Right cardiac atrium (tissue), 5 donors: ENCODE measurements at regions of chr18 and their contacts with region 1.

Region 1: GRCh38 chr18:623761-624620 is 27.2 kb downstream of the CLUL1 start:
- DNase-seq: peak; percentile 61 to 86 (median 70)
- ATAC-seq: peak; percentile 72 to 79
- H3K4me3 ChIP-seq: no peak overlapping the region
- H3K27ac ChIP-seq: no peak overlapping the region
- H3K4me1 ChIP-seq: no peaks in the 10 kb centered on the region
- H3K27me3 ChIP-seq: no peaks in the 10 kb centered on the region

Region 2: GRCh38 chr18:543447-544078 is 80.4 kb before region 1 on chr18:
- intact Hi-C with region 1: no loop called
- DNase-seq: no peak
- ATAC-seq: no peak
- H3K4me3 ChIP-seq: no peak overlapping the region
- H3K27ac ChIP-seq: no peak overlapping the region
- H3K4me1 ChIP-seq: no peaks in the 10 kb centered on the region
- H3K27me3 ChIP-seq: no peaks in the 10 kb centered on the region

Region 3: DNA sequence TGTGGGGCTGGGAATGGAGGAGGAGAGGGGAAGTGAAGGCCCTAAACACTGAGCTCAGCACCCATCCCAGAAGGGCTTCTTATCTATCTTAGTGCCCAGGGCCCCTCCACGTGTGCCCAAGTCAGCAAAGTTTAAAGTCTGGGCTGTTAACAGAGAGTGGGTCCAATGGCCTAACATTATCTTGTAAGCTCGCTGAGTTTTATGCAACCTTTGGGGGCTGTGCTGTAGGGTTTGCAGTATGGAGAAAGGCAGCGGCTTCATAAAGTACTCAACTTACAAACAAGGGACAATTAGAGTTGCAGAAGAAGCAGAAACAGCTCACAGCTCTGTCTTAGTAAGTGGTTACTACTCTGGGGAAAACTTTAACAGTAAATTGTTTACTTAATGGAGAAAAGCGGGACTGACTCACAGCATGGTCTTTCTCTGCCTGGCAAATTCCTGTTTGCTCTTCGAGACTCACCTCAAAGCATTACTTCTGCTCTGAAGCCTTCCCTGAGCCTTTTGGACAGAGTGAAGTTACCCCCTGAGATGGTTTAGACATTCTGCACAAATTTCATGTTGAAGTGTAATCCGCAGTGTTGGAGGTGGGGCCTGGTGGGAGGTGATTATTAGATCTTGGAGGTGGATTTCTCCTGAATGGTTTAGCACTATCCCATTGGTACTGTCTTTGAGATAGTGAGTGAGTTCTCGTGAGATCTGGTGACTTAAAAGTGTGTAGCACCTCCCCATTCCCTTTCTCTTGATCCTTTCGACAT is 79.4 kb after region 1 on chr18:
- intact Hi-C with region 1: loop called in 1 of 4 experiments (anchors 10 kb)
- DNase-seq: no peak
- ATAC-seq: peak in 1 of 2 donors; percentile 22
- H3K4me3 ChIP-seq: no peak overlapping the region
- H3K27ac ChIP-seq: no peak overlapping the region
- H3K4me1 ChIP-seq: no peaks in the 10 kb centered on the region
- H3K27me3 ChIP-seq: no peaks in the 10 kb centered on the region

Region 4: GRCh38 chr18:824179-824578 is 200.2 kb after region 1 on chr18:
- intact Hi-C with region 1: loop called in 1 of 4 experiments (anchors 5 kb)
- DNase-seq: no peak
- ATAC-seq: no peak
- H3K4me3 ChIP-seq: no peak overlapping the region
- H3K27ac ChIP-seq: no peak overlapping the region
- H3K4me1 ChIP-seq: no peaks in the 10 kb centered on the region
- H3K27me3 ChIP-seq: no peaks in the 10 kb centered on the region

Region 5: GRCh38 chr18:839224-840022 is 215.4 kb after region 1 on chr18:
- intact Hi-C with region 1: loop called in 2 of 4 experiments (anchors 5 kb)
- DNase-seq: peak; percentile 87 to 96 (median 95)
- ATAC-seq: peak; percentile 93 to 94
- H3K4me3 ChIP-seq: no peak overlapping the region
- H3K27ac ChIP-seq: no peak overlapping the region
- H3K4me1 ChIP-seq: no peaks in the 10 kb centered on the region
- H3K27me3 ChIP-seq: no peaks in the 10 kb centered on the region